ENCODE measurements at regions of chr11 and their contacts with region 1.

Region 1: DNA sequence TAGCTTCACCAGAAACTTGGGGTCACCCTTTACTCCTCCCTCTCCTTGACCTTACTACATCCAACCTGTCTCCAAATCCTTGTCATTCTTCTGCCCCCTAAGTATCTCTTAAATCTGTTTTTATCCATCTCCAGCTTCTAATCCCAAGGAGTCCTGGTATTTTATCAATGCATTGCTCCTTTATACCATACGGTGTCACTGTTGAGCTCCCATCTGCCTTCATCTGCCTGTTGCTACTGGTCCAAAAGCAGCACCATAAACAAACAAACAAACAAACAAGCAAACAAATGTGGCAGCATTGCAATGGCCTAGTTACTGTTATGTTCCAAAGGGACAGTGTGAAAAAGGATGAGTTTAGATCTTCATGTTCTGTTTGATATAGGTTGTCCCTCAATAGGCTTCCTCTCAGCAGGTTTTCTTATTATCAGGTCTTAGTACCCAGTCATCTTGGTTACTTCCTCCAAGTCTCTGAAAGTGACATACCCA is 34.2 kb downstream of the DNHD1 start:
- DNase-seq: no peak
- ATAC-seq: peak; percentile 47 to 50
- H3K4me3 ChIP-seq: no peak overlapping the region
- H3K27ac ChIP-seq: no peak overlapping the region
- H3K4me1 ChIP-seq: no peaks in the 10 kb centered on the region
- H3K27me3 ChIP-seq: no peaks in the 10 kb centered on the region

Region 2: DNA sequence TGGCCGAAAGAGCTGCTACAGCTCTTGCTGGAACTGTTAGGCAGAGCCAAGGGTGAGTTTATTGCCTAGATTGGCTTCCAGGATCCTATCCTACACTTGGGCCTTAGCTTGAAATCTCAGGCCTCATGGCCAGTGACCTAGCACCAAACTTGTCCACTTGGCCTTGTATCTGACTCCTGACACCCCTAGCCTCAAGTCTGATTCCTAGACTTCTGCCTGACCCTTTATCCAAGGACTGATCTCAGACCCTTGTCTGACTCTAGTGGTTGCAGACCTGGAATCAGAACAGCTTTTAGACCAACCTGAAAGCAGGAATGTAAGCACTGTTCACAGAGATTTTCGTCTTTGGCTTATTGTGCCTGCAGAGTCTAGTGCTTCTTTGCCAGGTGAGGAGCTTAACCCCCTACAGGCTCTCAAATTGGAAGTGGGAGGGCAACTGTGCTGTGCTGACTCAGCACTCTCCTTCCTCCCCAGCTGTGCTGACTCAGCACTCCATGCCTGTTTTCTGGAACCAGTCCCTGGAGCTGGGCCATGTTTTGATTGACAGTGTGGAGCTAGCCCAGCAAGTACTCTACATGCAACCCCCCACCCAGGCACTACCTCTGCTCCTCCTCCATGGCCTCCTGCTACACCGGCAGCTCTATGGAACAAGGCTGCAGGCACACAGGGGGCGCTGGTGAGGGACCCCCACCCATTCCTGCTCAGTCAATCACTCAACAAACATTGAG is 37.0 kb after region 1 on chr11:
- intact Hi-C with region 1: no loop called
- DNase-seq: peak; percentile 42 to 77 (median 76)
- ATAC-seq: peak; percentile 25 to 40
- H3K4me3 ChIP-seq: no peak overlapping the region
- H3K27ac ChIP-seq: no peak overlapping the region
- H3K4me1 ChIP-seq: peaks cover 5% of the 10 kb centered on the region
- H3K27me3 ChIP-seq: no peaks in the 10 kb centered on the region

Region 3: GRCh38 chr11:6603287-6604080 is 72.2 kb after region 1 on chr11 and contains the starts of genes ILK and RRP8:
- intact Hi-C with region 1: loop called in 1 of 4 experiments (anchors 5 kb)
- DNase-seq: peak; percentile 91 to 97 (median 97)
- ATAC-seq: peak; percentile 91 to 93
- H3K4me3 ChIP-seq: peak within 1 kb of the TSS; percentile 87
- H3K27ac ChIP-seq: peak within 1 kb of the TSS; percentile 99
- H3K4me1 ChIP-seq: peaks cover 23% of the 10 kb centered on the region
- H3K27me3 ChIP-seq: no peaks in the 10 kb centered on the region
- total RNA-seq, gene ILK: 176 to 196 (median 192) TPM
- total RNA-seq, gene RRP8: 15.8 to 21.7 (median 18.7) TPM

Region 4: DNA sequence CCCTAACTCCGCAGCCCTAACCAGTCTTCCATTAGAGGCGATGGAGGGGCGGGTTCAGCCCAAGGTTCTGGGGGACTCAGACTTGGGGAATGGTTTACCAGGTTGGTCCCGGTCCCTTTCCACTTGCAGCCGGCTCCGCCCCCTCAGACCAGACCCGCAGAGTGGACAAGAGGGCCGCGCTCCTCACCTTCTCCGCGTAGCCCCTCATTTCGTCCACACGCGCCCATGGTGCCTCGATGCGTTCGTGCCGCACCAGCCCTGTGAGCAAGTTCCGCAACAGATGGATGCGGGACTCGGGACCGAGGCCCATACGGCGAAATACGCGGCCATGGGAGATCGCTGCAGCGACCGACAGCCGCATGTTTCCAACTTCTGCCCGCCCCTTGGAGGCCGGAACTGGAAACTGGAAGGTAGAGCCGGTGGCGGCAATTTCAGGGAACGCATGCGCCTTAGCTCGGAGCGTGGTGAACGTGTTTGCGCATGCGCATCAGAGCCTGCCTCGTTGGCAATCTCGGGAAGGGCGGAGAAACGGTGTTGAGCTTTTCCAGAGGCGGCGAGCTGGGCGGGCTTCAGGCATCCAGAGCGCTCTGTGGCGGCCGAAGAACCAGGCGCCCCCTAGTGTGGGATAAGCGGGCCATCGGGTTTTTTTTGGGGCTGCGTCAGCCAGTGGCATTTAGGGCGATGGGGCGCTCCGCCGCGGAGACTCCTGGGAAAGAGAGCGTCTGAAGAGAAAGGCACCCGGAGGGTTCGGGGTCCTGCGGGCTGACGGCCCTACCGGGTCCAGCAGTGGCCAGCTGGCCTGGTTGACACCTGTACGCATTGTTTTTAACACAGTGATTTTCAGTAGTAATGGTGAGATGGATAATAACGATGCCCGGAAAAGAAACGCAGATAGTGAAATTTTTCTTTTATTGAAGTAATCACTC is 151.9 kb after region 1 on chr11 and contains the start of gene MRPL17:
- intact Hi-C with region 1: loop called in 2 of 4 experiments (anchors 5 to 10 kb)
- DNase-seq: peak; percentile 99 to 100 (median 99)
- ATAC-seq: peak; percentile 97 to 98
- H3K4me3 ChIP-seq: peak within 1 kb of the TSS; percentile 56
- H3K27ac ChIP-seq: peak within 1 kb of the TSS; percentile 76
- H3K4me1 ChIP-seq: no peaks in the 10 kb centered on the region
- H3K27me3 ChIP-seq: no peaks in the 10 kb centered on the region
- total RNA-seq, gene MRPL17: 36.7 to 45.1 (median 41.9) TPM

Region 5: DNA sequence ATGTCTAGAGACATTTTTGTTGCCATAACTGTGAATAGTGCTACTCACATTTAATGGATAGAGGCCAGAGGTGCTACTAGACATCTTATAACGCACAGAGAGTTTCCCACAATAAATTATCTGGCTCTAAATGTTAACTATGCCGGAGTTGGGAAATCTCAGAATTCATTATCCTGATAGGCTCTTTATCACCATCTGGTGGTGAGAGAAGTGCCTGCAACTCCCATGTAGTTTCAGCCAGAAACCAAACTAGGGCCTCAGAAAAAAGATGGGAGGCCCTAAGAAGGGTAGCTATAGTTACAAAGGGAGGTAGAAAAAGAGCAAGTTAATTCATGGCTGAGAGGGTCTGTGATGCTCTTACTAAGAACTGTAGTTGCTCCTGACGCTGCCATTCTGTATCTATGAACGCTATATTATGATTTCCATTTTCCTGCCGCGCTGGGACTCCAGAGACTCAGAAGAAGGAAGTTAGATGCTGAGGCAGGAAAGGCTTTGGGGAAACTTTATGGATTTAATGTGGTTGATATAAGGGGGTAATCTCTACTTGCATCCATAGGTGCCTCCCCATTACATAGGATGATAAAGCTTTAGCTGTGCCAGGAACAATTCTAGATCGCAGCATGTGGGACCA is 174.7 kb after region 1 on chr11:
- intact Hi-C with region 1: loop called in 2 of 4 experiments (anchors 2 to 10 kb)
- DNase-seq: peak in 1 of 3 donors; percentile 41
- ATAC-seq: peak; percentile 40 to 57
- H3K4me3 ChIP-seq: no peak overlapping the region
- H3K27ac ChIP-seq: no peak overlapping the region
- H3K4me1 ChIP-seq: no peaks in the 10 kb centered on the region
- H3K27me3 ChIP-seq: no peaks in the 10 kb centered on the region

Measured in right cardiac atrium (tissue), 5 donors.